Transverse colon (tissue), 4 donors: ENCODE measurements at regions of chr4 and their contacts with region 1.

Region 1: GRCh38 chr4:39134683-39135319 is 47.5 kb upstream of the WDR19 start:
- DNase-seq: no peak
- H3K4me3 ChIP-seq: no peak overlapping the region
- H3K27ac ChIP-seq: peak overlapping the region in 1 of 4 donors; percentile 34
- H3K4me1 ChIP-seq: peaks cover 0 to 6% (median 4%) of the 10 kb centered on the region in 4 donors
- H3K27me3 ChIP-seq: no peaks in the 10 kb centered on the region
- CTCF ChIP-seq: no peak
- EP300 ChIP-seq: no peak
- POLR2A ChIP-seq: no peak

Region 2: DNA sequence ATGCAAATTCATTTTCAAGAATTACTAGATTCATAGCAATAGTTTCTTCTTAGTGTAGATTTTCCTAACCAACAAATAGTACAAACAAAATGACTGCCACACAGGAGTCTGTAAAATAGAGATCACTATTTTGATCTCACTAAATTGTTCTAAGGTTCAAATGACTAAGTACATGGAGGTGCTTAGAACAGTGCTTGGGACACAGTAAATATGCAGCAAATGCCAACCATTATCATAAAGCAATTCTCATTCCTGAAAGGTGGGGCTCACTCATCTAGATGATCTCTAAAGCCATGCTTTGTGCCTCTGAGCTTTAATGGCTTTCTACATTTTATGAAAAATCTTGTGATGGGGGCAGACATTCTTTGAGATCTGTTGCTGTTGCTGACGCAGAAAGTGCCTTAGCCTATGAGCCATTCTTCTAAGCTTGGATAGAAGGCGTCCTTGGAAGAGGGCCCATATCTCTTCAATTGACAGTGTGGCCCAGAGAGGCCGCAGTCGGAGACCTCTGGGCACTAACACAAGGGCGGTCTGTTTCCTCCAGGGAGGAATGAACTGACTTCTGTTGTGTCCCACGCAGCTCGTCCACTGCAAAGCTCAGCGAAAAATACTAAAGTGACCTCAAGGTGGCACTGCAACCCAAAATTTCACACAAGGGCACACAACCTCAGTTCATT is 375.6 kb before region 1 on chr4:
- in situ Hi-C with region 1: loop called in 3 of 4 experiments (anchors 5 to 25 kb)
- intact Hi-C with region 1: loop called (anchors 10 kb)
- DNase-seq: peak; percentile 68
- H3K4me3 ChIP-seq: no peak overlapping the region
- H3K27ac ChIP-seq: peak overlapping the region in 2 of 4 donors; percentile 2 to 22
- H3K4me1 ChIP-seq: peaks cover 0 to 5% (median 0%) of the 10 kb centered on the region in 4 donors
- H3K27me3 ChIP-seq: no peaks in the 10 kb centered on the region
- CTCF ChIP-seq: peak; percentile 69 to 81 (median 71)
- EP300 ChIP-seq: no peak
- POLR2A ChIP-seq: no peak

Region 3: DNA sequence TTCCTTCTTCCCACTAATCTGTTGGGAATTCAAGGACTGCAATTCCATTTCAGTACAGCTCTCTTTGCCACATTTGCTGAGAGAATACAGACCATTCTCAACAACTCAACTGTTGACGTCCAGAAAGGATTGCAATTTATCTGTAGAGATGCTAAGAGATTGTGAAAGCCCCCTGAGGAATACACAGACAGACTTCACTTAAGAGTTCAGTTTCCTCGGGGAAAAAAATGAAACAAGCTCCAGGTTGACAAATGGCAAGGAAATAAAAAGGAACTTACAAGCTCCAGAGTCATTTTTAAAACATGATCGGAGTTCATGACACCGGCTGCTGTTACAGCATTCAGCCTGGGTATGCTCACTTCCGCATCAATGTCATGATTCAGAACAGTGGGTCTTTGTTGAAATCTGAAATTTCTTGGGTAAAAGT is 365.8 kb before region 1 on chr4:
- in situ Hi-C with region 1: loop called in 3 of 4 experiments (anchors 5 to 25 kb)
- intact Hi-C with region 1: loop called (anchors 10 kb)
- DNase-seq: no peak
- H3K4me3 ChIP-seq: no peak overlapping the region
- H3K27ac ChIP-seq: peak overlapping the region in 1 of 4 donors; percentile 17
- H3K4me1 ChIP-seq: no peaks in the 10 kb centered on the region
- H3K27me3 ChIP-seq: no peaks in the 10 kb centered on the region
- CTCF ChIP-seq: no peak
- EP300 ChIP-seq: no peak
- POLR2A ChIP-seq: no peak

Region 4: GRCh38 chr4:38782452-38783108 is 352.2 kb before region 1 on chr4 and contains the start of gene TLR10:
- in situ Hi-C with region 1: loop called in 1 of 4 experiments (anchors 25 kb)
- intact Hi-C with region 1: no loop called
- DNase-seq: peak; percentile 46
- H3K4me3 ChIP-seq: no peak within 1 kb of the TSS
- H3K27ac ChIP-seq: no peak within 1 kb of the TSS
- H3K4me1 ChIP-seq: peaks cover 0 to 3% (median 0%) of the 10 kb centered on the region in 4 donors
- H3K27me3 ChIP-seq: no peaks in the 10 kb centered on the region
- CTCF ChIP-seq: peak; percentile 66 to 75 (median 69)
- EP300 ChIP-seq: no peak
- POLR2A ChIP-seq: no peak
- total RNA-seq, gene TLR10: 4.6 TPM in 1 of 4 donors, not detected in the others

Region 5: GRCh38 chr4:38902695-38903094 is 232.1 kb before region 1 on chr4:
- in situ Hi-C with region 1: loop called in 3 of 4 experiments (anchors 5 to 10 kb)
- intact Hi-C with region 1: loop called (anchors 2 kb)
- DNase-seq: no peak
- H3K4me3 ChIP-seq: no peak overlapping the region
- H3K27ac ChIP-seq: peak overlapping the region in 1 of 4 donors; percentile 10
- H3K4me1 ChIP-seq: peaks cover 8 to 28% (median 19%) of the 10 kb centered on the region in 4 donors
- H3K27me3 ChIP-seq: no peaks in the 10 kb centered on the region
- CTCF ChIP-seq: peak; percentile 30 to 44 (median 33)
- EP300 ChIP-seq: no peak
- POLR2A ChIP-seq: no peak